Left ventricle myocardium superior (tissue), 1 donor: ENCODE measurements at regions of chr12 and their contacts with region 1.

Region 1: DNA sequence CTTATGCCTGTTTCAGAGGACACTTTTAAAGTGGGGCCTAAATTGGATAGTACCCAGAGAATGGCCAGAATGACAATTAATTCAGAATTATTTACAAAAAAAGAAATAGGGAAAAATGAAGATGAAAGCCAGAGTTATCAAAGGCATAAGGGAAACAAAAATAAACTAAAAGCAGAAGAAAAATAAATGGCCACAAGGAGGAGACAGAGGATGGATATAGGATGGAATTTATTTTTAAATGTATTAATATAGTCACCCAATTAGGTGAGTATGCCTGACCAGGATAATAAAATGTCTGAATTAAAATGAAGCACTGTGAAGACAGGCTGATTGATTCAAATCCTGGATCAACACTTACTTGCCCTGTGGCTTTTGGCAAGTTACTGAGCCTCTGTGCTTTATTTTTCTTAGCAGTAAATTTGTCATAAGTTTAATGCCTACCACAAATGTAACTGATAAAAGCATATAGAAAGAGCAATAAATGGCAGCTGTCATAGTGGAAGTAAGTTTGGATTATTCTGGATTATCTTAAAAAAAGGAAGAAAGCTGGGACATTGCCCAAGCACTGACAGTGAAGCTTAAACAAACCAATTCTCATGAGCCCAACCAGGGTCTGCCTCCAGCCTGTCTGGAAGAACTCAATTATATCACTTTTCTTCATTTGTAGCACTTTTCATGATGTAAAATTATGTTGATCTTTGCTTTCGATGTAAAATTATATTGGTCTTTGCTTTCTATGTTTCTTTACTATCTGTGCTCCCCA is 3.5 kb downstream of the CLEC9A start:
- DNase-seq: no peak
- ATAC-seq: no peak

Region 2: DNA sequence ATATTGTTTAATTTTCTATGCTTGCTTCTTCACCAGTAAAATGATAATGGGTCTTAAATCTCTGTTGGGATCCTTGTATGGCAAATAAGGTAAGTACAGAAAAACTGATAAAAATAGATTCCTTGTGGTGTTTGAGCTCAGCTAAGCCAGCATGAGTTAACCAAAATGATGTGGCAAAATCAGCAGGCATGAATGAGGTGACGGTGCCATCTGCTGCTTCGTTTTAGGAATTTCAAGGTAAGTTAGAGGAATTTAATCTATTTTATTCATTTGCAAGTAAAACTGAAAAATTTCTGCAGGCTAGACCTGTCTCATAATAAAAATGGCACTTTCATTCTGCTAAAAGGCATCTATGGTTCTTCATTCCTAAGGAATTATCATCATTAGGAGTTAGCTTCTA is 106.0 kb after region 1 on chr12:
- intact Hi-C with region 1: loop called (anchors 5 kb)
- DNase-seq: no peak
- ATAC-seq: peak; percentile 46